A673 (cell line): ENCODE measurements at regions of chrX and their contacts with region 1.

Region 1: DNA sequence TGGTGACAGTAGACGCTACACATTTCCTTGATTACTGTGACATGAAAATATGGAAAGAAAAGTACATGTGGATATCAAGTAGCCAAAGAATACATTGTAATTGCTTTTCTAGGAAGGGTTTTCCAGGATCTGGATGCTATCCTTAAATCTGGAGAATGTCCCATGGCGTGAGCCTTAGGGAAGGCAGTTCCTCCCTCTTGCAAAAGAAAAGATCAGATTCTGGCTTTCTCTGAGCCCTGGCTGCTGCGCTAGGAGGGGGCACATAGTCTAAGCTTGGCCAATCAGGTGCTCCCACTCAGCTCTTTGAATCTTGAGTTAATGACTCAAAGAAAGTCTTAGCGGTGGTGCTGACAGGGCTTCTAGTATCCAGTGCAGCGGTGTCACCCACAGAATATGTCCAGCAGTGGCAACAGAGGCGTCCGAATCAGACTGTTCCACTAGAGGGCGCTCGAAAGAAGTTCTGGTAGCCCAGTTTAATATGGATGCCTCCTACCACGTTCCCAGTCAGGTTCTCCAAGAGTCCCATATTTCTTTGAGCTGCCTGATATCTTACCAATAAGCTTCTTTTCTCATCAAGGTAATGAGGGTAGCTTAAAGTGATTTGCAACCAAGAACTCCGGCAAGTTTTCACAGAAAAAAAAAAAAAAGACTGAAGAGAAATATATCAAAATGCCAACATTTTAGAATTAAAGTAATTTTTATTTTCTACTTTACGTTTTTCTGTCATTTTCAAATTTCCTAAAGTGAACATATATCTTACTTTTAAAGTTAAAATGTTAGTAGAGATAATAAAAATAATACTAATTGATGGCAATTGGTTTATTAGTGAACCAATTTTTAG is 213.4 kb upstream of the S100G start:
- DNase-seq: peak; percentile 84
- H3K4me3 ChIP-seq: no peak overlapping the region
- H3K27ac ChIP-seq: no peak overlapping the region
- H3K4me1 ChIP-seq: no peaks in the 10 kb centered on the region
- H3K27me3 ChIP-seq: peaks cover 6% of the 10 kb centered on the region
- CTCF ChIP-seq: peak; percentile 84

Region 2: GRCh38 chrX:15749642-15750610 is 686.6 kb before region 1 on chrX:
- CTCF ChIA-PET with region 1: no interaction called
- POLR2A ChIA-PET with region 1: no interaction called
- intact Hi-C with region 1: loop called (anchors 10 kb)
- DNase-seq: no peak
- H3K4me3 ChIP-seq: no peak overlapping the region
- H3K27ac ChIP-seq: no peak overlapping the region
- H3K4me1 ChIP-seq: no peaks in the 10 kb centered on the region
- H3K27me3 ChIP-seq: no peaks in the 10 kb centered on the region
- CTCF ChIP-seq: no peak

Region 3: DNA sequence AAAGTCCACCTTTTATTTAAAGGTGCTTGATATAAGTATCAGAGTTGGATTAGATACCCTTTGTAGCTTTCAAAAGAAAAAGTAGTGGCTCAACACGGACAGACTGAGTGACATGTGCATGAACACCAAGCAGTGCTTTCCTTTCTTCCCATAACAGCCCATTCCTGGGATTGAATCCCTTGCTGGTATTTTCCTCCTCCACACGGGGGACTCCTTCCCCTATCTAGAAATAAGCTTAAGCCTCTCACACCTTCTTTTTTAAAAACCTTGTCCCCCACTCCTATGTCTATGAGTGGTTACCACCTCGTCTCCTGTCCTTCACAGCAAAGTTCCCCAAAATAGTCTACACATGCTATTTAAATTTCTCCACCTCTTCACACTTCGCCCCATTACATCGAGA is 587.0 kb before region 1 on chrX:
- CTCF ChIA-PET with region 1: no interaction called
- POLR2A ChIA-PET with region 1: no interaction called
- intact Hi-C with region 1: loop called (anchors 5 kb)
- DNase-seq: peak; percentile 59
- H3K4me3 ChIP-seq: no peak overlapping the region
- H3K27ac ChIP-seq: peak overlapping the region; percentile 26
- H3K4me1 ChIP-seq: peaks cover 17% of the 10 kb centered on the region
- H3K27me3 ChIP-seq: no peaks in the 10 kb centered on the region
- CTCF ChIP-seq: peak; percentile 56

Region 4: GRCh38 chrX:16670998-16671397 is 234.4 kb after region 1 on chrX:
- CTCF ChIA-PET with region 1: interaction called, 7 read pairs
- POLR2A ChIA-PET with region 1: no interaction called
- intact Hi-C with region 1: loop called (anchors 5 kb)
- DNase-seq: peak; percentile 75
- H3K4me3 ChIP-seq: no peak overlapping the region
- H3K27ac ChIP-seq: no peak overlapping the region
- H3K4me1 ChIP-seq: no peaks in the 10 kb centered on the region
- H3K27me3 ChIP-seq: no peaks in the 10 kb centered on the region
- CTCF ChIP-seq: peak; percentile 57